Activated CD8-positive, alpha-beta T cell treated with anti-CD3 and anti-CD28 coated beads for 36 hours (primary cell): ENCODE measurements at regions of chr4 and their contacts with region 1.

Region 1: GRCh38 chr4:140609548-140610425 is 41.0 kb upstream of the UCP1 start:
- DNase-seq: no peak
- ATAC-seq: peak; percentile 73
- H3K4me3 Mint-ChIP-seq: no peak overlapping the region
- H3K27ac Mint-ChIP-seq: no peak overlapping the region
- H3K4me1 Mint-ChIP-seq: peaks cover 3% of the 10 kb centered on the region
- H3K27me3 Mint-ChIP-seq: peaks cover 6% of the 10 kb centered on the region
- CTCF ChIP-seq: peak; percentile 59

Region 2: GRCh38 chr4:140373328-140374129 is 236.3 kb before region 1 on chr4 and contains the start of gene SCOC:
- CTCF ChIA-PET with region 1: interaction called, 10 read pairs
- POLR2A ChIA-PET with region 1: no interaction called
- intact Hi-C with region 1: no loop called
- DNase-seq: peak; percentile 99
- ATAC-seq: peak; percentile 97
- H3K4me3 Mint-ChIP-seq: no peak within 1 kb of the TSS
- H3K27ac Mint-ChIP-seq: peak within 1 kb of the TSS; percentile 67
- H3K4me1 Mint-ChIP-seq: peaks cover 39% of the 10 kb centered on the region
- H3K27me3 Mint-ChIP-seq: no peaks in the 10 kb centered on the region
- CTCF ChIP-seq: no peak
- total RNA-seq, gene SCOC: 44.6 to 44.7 TPM

Region 3: GRCh38 chr4:140427106-140427961 is 182.5 kb before region 1 on chr4 and contains the start of gene CLGN:
- CTCF ChIA-PET with region 1: interaction called, 14 read pairs
- POLR2A ChIA-PET with region 1: no interaction called
- intact Hi-C with region 1: no loop called
- DNase-seq: peak; percentile 68
- ATAC-seq: peak; percentile 91
- H3K4me3 Mint-ChIP-seq: peak within 1 kb of the TSS; percentile 73
- H3K27ac Mint-ChIP-seq: no peak within 1 kb of the TSS
- H3K4me1 Mint-ChIP-seq: peaks cover 5% of the 10 kb centered on the region
- H3K27me3 Mint-ChIP-seq: peaks cover 38% of the 10 kb centered on the region
- CTCF ChIP-seq: peak; percentile 54
- total RNA-seq, gene CLGN: 0.23 to 0.31 TPM

Region 4: GRCh38 chr4:140523857-140524742 is 85.7 kb before region 1 on chr4 and contains the start of gene ELMOD2:
- CTCF ChIA-PET with region 1: interaction called, 11 read pairs
- POLR2A ChIA-PET with region 1: interaction called, 4 read pairs
- intact Hi-C with region 1: no loop called
- DNase-seq: peak; percentile 99
- ATAC-seq: peak; percentile 100
- H3K4me3 Mint-ChIP-seq: peak within 1 kb of the TSS; percentile 91
- H3K27ac Mint-ChIP-seq: peak within 1 kb of the TSS; percentile 82
- H3K4me1 Mint-ChIP-seq: peaks cover 15% of the 10 kb centered on the region
- H3K27me3 Mint-ChIP-seq: no peaks in the 10 kb centered on the region
- CTCF ChIP-seq: peak; percentile 91
- total RNA-seq, gene ELMOD2: 11.9 to 15.8 TPM